WTC11 (cell line): ENCODE measurements at regions of chr1 and their contacts with region 1.

Region 1: GRCh38 chr1:174204697-174205308 is 45.5 kb downstream of the RABGAP1L start:
- DNase-seq: no peak
- ATAC-seq: peak; percentile 36; the same call in 1 of the 2 replicates
- H3K4me3 Mint-ChIP-seq: no peak overlapping the region
- H3K27ac Mint-ChIP-seq: no peak overlapping the region
- H3K4me1 Mint-ChIP-seq: peaks cover 20% of the 10 kb centered on the region
- H3K27me3 Mint-ChIP-seq: no peaks in the 10 kb centered on the region
- CTCF ChIP-seq: no peak

Region 2: GRCh38 chr1:174217787-174218574 is 13.2 kb after region 1 on chr1:
- CTCF ChIA-PET with region 1: interaction called, 16 read pairs
- POLR2A ChIA-PET with region 1: interaction called, 3 read pairs
- DNase-seq: no peak
- ATAC-seq: peak; percentile 66
- H3K4me3 Mint-ChIP-seq: no peak overlapping the region
- H3K27ac Mint-ChIP-seq: no peak overlapping the region
- H3K4me1 Mint-ChIP-seq: no peaks in the 10 kb centered on the region
- H3K27me3 Mint-ChIP-seq: no peaks in the 10 kb centered on the region
- CTCF ChIP-seq: peak; percentile 49

Region 3: DNA sequence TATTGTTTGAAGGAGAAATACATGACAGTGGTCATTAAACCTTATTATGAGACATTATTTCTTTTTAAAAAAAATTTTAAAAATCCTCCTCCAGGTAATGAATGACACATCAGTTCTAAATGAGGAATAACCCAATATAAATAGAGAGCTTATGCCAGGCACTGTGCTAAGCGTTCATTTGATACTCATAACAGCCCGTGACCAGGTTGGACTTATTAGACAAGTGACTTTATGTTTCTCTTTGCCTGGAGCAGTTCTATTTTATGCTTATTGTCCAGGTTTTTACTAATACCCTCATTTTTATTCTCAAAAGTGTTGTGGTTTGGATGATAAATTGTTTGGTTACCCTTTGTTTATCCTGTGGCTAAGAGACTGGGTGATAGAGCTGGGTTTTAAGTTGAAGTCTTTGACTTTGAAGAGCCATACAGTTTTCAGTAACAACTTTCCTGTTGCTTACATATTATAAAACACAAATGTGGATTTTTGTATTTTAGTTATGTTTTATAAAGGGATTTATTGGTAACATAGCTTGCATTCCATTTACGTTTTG is 38.7 kb after region 1 on chr1:
- CTCF ChIA-PET with region 1: no interaction called
- POLR2A ChIA-PET with region 1: no interaction called
- DNase-seq: no peak
- ATAC-seq: no peak
- H3K4me3 Mint-ChIP-seq: no peak overlapping the region
- H3K27ac Mint-ChIP-seq: no peak overlapping the region
- H3K4me1 Mint-ChIP-seq: peaks cover 12% of the 10 kb centered on the region
- H3K27me3 Mint-ChIP-seq: no peaks in the 10 kb centered on the region
- CTCF ChIP-seq: no peak